ENCODE measurements at regions of chr2 and their contacts with region 1.

Region 1: GRCh38 chr2:223993621-223994232 is 36.5 kb downstream of the MRPL44 start:
- DNase-seq: peak; percentile 82
- ATAC-seq: peak; percentile 77
- H3K4me3 ChIP-seq: no peak overlapping the region
- H3K27ac ChIP-seq: no peak overlapping the region
- H3K4me1 ChIP-seq: peaks cover 12% of the 10 kb centered on the region
- H3K27me3 ChIP-seq: no peaks in the 10 kb centered on the region
- CTCF ChIP-seq: peak; percentile 87
- POLR2A ChIP-seq: no peak
- RAD21 ChIP-seq: peak; percentile 90

Region 2: DNA sequence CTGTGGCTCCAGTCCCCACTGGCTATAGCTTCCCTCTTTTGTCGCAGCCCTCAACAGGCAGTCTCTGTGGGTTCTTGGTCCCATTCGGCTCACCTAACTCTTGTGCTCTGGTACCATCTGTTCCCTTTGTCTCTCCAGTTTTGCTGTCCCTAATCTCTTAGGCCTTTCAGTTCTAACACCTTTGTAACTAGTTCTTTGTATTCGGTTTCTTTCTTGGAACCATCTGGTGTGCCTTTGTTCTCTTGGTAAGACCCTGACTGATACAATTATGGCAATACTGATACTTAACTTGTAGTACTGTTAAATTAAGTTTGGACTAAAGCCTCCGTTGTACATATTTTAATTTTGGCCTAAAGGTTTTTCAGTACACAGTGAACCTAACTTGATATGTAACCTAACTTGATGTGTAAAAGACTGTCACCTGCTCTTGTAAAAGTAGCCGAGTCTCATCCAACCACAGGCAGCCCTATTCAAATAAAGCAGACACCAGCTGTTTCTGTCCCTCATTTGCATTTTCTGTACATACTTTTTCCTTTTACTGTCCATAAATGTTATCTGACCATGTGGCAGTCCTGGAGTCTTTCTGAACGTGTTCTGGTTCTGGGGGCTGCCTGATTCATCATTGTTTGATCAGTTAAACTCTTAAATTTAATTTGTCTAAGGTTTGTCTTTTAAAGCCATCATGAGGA is 41.3 kb before region 1 on chr2:
- CTCF ChIA-PET with region 1: no interaction called
- POLR2A ChIA-PET with region 1: no interaction called
- dilution Hi-C with region 1: no loop called
- in situ Hi-C with region 1: no loop called
- intact Hi-C with region 1: no loop called
- DNase-seq: no peak
- ATAC-seq: no peak
- H3K4me3 ChIP-seq: no peak overlapping the region
- H3K27ac ChIP-seq: no peak overlapping the region
- H3K4me1 ChIP-seq: peaks cover 2% of the 10 kb centered on the region; the same call in 1 of the 2 replicates
- H3K27me3 ChIP-seq: no peaks in the 10 kb centered on the region
- CTCF ChIP-seq: no peak
- POLR2A ChIP-seq: no peak
- RAD21 ChIP-seq: no peak

Region 3: GRCh38 chr2:224039124-224039940 is 45.6 kb after region 1 on chr2 and contains the start of gene SERPINE2:
- CTCF ChIA-PET with region 1: interaction called, 6 read pairs
- POLR2A ChIA-PET with region 1: no interaction called
- dilution Hi-C with region 1: no loop called
- in situ Hi-C with region 1: no loop called
- intact Hi-C with region 1: loop called (anchors 2 kb)
- DNase-seq: peak; percentile 37
- ATAC-seq: peak; percentile 81
- H3K4me3 ChIP-seq: peak within 1 kb of the TSS; percentile 99
- H3K27ac ChIP-seq: peak within 1 kb of the TSS; percentile 29; the same call in 1 of the 2 replicates
- H3K4me1 ChIP-seq: peaks cover 15% of the 10 kb centered on the region
- H3K27me3 ChIP-seq: peaks cover 13% of the 10 kb centered on the region
- CTCF ChIP-seq: peak; percentile 52
- POLR2A ChIP-seq: no peak
- RAD21 ChIP-seq: peak; percentile 64
- total RNA-seq, gene SERPINE2: 21.1 and 24.0 TPM in 2 replicates

Region 4: DNA sequence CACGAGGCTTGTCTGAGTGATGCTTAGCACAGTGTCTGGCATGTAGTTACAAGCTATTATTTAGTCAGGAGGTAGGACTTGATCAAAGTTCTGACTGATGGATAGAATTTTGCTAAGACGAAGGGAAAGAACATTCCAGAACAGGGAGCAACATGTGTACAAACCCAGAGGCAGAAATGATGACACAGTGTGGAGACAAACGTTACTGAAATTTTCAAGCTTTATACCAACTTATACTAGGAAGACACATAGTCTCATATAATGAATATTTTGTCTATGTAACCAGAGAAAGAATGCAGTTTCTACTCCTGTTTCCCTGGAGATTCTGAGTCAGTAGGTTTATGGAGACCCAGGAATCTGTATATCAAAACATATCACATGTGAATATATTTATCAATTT is 284.8 kb after region 1 on chr2:
- CTCF ChIA-PET with region 1: interaction called, 49 read pairs
- POLR2A ChIA-PET with region 1: no interaction called
- dilution Hi-C with region 1: no loop called
- in situ Hi-C with region 1: no loop called
- intact Hi-C with region 1: no loop called
- DNase-seq: peak; percentile 33
- ATAC-seq: peak; percentile 60
- H3K4me3 ChIP-seq: no peak overlapping the region
- H3K27ac ChIP-seq: no peak overlapping the region
- H3K4me1 ChIP-seq: no peaks in the 10 kb centered on the region
- H3K27me3 ChIP-seq: peaks cover 4% of the 10 kb centered on the region; the same call in 1 of the 2 replicates
- CTCF ChIP-seq: no peak
- POLR2A ChIP-seq: no peak
- RAD21 ChIP-seq: no peak; the same call in 1 of the 2 replicates

Region 5: DNA sequence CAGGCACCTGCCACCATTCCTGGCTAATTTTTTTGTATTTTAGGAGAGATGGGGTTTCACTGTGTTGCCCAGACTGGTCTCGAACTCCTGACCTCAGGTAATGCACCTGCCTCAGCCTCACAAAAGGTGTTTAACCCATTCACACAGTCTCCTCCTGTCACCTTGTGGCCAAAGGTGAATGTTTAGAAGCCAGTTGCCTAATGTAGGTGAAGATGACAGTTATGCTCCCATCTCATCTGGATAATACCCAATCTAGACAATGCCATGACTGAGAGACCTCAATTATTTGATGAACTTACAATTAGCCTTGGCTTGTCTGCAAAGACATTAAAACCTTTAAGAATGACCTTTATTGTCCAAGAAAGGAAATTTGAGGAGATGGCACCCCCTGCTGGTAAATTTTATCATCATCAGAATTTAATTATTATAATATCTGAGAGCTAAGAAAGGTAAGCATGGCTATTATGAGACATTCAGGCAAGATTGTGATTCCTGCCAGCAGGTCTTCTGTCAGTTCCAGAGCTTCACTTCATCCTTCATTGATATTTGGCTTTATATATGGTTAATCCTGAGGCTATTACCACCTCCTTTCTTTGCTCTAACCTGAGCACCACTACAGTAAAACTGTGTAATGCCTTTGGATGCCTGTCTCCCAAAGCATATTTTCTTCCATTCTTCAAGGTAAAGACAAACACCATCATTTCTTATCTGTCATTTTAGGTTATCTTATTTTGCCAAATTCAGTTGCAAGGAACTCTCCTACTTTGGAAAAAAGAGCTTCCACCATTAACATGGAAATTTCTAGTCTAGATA is 290.6 kb after region 1 on chr2:
- CTCF ChIA-PET with region 1: interaction called, 49 read pairs
- POLR2A ChIA-PET with region 1: no interaction called
- dilution Hi-C with region 1: no loop called
- in situ Hi-C with region 1: loop called (anchors 5 kb)
- intact Hi-C with region 1: loop called (anchors 1 kb)
- DNase-seq: peak; percentile 25
- ATAC-seq: peak; percentile 46; the same call in 1 of the 2 replicates
- H3K4me3 ChIP-seq: no peak overlapping the region
- H3K27ac ChIP-seq: no peak overlapping the region
- H3K4me1 ChIP-seq: no peaks in the 10 kb centered on the region
- H3K27me3 ChIP-seq: peaks cover 14% of the 10 kb centered on the region
- CTCF ChIP-seq: peak; percentile 67
- POLR2A ChIP-seq: no peak
- RAD21 ChIP-seq: peak; percentile 82

Measured in IMR-90 (cell line).